IMR-90 (cell line): ENCODE measurements at regions of chr10 and their contacts with region 1.

Region 1: GRCh38 chr10:122504610-122504950 is 43.2 kb downstream of the HTRA1 start:
- DNase-seq: peak; percentile 94
- ATAC-seq: peak; percentile 99
- H3K4me3 ChIP-seq: no peak overlapping the region
- H3K27ac ChIP-seq: no peak overlapping the region
- H3K4me1 ChIP-seq: peaks cover 6% of the 10 kb centered on the region
- H3K27me3 ChIP-seq: no peaks in the 10 kb centered on the region
- CTCF ChIP-seq: no peak
- POLR2A ChIP-seq: no peak
- RAD21 ChIP-seq: peak; percentile 21; the same call in 1 of the 2 replicates

Region 2: DNA sequence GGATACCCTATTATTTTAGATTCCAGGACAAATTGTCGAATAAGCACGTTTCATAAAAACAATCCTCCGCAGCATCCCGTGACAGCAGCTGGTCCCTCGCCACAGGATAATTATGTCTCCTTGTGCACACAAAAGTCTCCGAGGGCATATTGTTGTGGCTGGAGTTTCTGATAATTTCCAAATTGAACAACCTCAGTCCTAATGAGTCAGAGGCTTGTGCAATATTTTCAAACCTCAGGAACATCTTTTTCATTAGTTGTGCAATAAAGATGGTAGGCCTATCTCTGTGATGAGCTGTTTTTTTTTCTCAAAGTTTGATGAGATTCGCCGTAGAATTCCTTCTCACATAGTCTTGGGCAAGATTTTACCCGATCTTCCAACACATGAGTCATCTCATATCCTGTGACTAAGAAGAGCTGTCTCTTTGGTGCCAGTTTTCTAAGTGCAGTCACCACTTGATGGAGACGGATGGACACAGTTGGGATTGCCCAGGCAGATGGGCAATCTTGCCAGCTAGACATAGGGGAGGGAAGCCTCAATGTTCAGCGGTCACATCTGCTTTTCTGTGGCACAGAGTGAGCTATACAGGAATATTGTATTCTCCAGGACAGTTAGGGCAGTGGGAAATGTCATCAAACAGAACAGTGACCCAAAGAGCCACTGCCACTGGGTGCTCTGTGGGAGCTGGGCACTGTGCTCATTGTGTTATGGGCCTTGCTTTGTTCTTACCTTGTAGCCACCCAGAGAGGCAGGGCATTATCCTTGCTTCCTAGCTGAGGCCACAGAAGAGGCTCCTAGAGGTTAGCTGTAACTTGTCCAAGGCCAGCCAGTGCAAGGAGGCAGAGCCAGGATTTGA is 35.4 kb before region 1 on chr10:
- CTCF ChIA-PET with region 1: no interaction called
- POLR2A ChIA-PET with region 1: no interaction called
- dilution Hi-C with region 1: no loop called
- in situ Hi-C with region 1: no loop called
- intact Hi-C with region 1: loop called (anchors 2 kb)
- DNase-seq: peak; percentile 98
- ATAC-seq: peak; percentile 86
- H3K4me3 ChIP-seq: no peak overlapping the region
- H3K27ac ChIP-seq: peak overlapping the region; percentile 39; the same call in 1 of the 2 replicates
- H3K4me1 ChIP-seq: peaks cover 14% of the 10 kb centered on the region
- H3K27me3 ChIP-seq: no peaks in the 10 kb centered on the region
- CTCF ChIP-seq: peak; percentile 9; the same call in 1 of the 2 replicates
- POLR2A ChIP-seq: no peak
- RAD21 ChIP-seq: no peak; the same call in 1 of the 2 replicates